HEK293 (cell line): ENCODE measurements at regions of chr1 and their contacts with region 1.

Region 1: GRCh38 chr1:99685516-99686180 is 39.7 kb downstream of the PALMD start:
- H3K4me3 ChIP-seq: no peak overlapping the region
- H3K27ac ChIP-seq: no peak overlapping the region
- H3K4me1 ChIP-seq: peaks cover 8% of the 10 kb centered on the region
- CTCF ChIP-seq: peak; percentile 31; the same call in 1 of the 2 replicates

Region 2: DNA sequence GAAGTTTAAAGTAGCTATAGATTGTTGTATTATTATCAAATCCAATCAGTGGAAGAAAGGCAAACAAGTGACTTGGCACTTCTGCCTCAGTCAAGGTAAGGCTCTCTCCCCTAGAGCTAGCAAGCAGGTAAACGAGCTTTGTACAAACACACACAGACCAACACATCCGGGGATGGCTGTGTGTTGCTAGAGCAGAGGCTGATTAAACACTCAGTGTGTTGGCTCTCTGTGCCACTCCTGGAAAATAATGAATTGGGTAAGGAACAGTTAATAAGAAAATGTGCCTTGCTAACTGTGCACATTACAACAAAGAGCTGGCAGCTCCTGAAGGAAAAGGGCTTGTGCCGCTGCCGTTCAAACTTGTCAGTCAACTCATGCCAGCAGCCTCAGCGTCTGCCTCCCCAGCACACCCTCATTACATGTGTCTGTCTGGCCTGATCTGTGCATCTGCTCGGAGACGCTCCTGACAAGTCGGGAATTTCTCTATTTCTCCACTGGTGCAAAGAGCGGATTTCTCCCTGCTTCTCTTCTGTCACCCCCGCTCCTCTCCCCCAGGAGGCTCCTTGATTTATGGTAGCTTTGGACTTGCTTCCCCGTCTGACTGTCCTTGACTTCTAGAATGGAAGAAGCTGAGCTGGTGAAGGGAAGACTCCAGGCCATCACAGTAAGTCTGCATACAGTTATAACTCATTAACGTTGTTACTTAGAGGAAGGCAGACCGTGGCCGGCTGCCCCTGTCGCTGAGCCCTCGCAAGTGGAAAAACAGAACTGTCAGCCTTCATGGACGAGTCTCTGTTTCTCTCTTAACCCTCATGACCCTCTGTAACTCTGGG is 39.7 kb before region 1 on chr1 and contains the start of gene PALMD:
- CTCF ChIA-PET with region 1: interaction called, 11 read pairs
- POLR2A ChIA-PET with region 1: no interaction called
- H3K4me3 ChIP-seq: no peak within 1 kb of the TSS
- H3K27ac ChIP-seq: no peak within 1 kb of the TSS; the same call in 1 of the 2 replicates
- H3K4me1 ChIP-seq: peaks cover 2% of the 10 kb centered on the region; the same call in 1 of the 2 replicates
- CTCF ChIP-seq: no peak

Region 3: GRCh38 chr1:99696616-99697015 is 11.0 kb after region 1 on chr1:
- CTCF ChIA-PET with region 1: interaction called, 14 read pairs
- POLR2A ChIA-PET with region 1: no interaction called
- H3K4me3 ChIP-seq: no peak overlapping the region
- H3K27ac ChIP-seq: no peak overlapping the region
- H3K4me1 ChIP-seq: no peaks in the 10 kb centered on the region
- CTCF ChIP-seq: no peak

Region 4: DNA sequence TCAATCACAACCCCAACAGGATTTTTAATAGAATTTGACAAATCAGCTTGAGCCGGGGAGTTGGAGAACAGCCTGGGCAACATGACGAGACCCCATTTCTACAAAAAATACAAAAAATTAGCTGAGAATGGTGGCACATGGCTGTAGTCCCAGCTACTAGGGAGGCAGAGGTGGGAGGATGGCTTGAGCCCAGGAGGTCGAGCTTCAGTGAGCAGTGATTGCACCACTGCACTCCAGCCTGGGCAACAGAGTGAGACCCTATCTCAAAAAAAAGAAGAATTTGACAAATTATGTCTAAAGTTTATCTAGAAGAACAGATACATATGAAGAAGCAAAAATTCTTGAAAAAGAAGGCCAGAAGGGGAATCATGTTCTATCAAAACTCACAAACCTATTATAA is 37.6 kb after region 1 on chr1:
- CTCF ChIA-PET with region 1: no interaction called
- POLR2A ChIA-PET with region 1: no interaction called
- H3K4me3 ChIP-seq: no peak overlapping the region
- H3K27ac ChIP-seq: no peak overlapping the region
- H3K4me1 ChIP-seq: no peaks in the 10 kb centered on the region
- CTCF ChIP-seq: no peak